ENCODE measurements at regions of chr16 and their contacts with region 1.

Region 1: GRCh38 chr16:55773859-55774549 is 58.9 kb downstream of the CES1 start:
- DNase-seq: no peak
- H3K4me3 ChIP-seq: no peak overlapping the region
- CTCF ChIP-seq: no peak
- POLR2A ChIP-seq: no peak

Region 2: GRCh38 chr16:54546521-54546920 is 1227.5 kb before region 1 on chr16:
- intact Hi-C with region 1: loop called (anchors 10 kb)
- DNase-seq: no peak
- H3K4me3 ChIP-seq: no peak overlapping the region
- CTCF ChIP-seq: no peak
- POLR2A ChIP-seq: no peak

Region 3: DNA sequence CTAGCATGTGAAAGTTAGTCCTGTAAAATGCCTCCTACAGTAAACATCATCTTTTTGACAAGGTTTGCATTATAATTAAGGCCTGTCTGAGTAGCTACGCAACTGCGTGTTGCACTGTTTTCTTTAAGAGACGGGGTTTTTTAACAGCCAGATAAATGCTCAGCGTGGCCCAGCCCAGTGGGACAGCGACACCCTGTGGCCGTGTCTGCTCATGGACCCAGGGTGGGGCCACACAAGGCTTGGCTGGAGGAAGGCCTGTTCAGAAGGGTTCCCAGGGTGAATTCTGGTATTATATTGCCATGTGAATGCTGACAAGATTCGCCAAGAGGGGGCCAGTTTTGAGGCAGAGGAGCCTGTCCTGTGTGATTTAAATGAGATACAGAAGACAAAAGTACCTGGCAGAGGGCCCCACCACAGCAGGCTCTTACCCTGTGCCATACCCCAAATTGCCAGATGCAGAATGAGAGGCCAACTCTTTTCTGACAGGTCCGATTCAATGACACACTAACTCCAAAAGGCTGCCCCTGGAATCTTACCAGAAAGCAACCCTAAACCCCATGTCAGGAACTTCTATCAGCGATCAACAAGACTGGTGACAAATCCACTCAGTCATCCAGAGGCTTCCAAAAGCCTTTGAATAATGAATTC is 515.9 kb before region 1 on chr16:
- intact Hi-C with region 1: no loop called
- DNase-seq: peak; percentile 75 to 94
- H3K4me3 ChIP-seq: no peak overlapping the region
- CTCF ChIP-seq: peak in 1 of 3 donors; percentile 67
- POLR2A ChIP-seq: no peak

Measured in lower leg skin (tissue), 4 donors.